CD8-positive, alpha-beta memory T cell (primary cell): ENCODE measurements at regions of chr2 and their contacts with region 1.

Region 1: DNA sequence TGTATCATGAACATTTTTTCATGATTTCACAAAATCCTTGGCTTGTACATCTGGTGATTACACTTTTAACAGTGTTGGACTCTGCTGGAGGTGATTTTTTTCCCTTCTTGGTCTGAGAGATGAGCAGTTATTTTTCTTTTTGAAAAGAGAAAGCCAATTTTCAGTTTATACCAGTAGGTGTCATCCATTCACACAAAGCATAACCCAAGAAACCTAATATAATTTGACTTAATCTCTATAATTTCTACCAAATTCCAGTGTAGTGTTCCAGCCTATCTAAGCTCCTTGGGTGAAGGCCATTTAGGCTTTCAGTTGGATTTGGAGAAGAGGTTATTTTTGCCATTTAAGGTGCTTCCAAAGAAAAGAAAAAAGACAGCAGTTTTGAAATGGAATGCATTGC is 7.7 kb upstream of the ICOS start:
- DNase-seq: no peak
- H3K4me3 ChIP-seq: no peak overlapping the region
- H3K4me3 Mint-ChIP-seq: no peak overlapping the region
- H3K27ac ChIP-seq: no peak overlapping the region
- H3K27ac Mint-ChIP-seq: no peak overlapping the region
- H3K4me1 ChIP-seq: peaks cover 23% of the 10 kb centered on the region
- H3K4me1 Mint-ChIP-seq: peaks cover 15 to 40% (median 29%) of the 10 kb centered on the region in 3 donors
- H3K27me3 ChIP-seq: no peaks in the 10 kb centered on the region
- H3K27me3 Mint-ChIP-seq: no peaks in the 10 kb centered on the region

Region 2: DNA sequence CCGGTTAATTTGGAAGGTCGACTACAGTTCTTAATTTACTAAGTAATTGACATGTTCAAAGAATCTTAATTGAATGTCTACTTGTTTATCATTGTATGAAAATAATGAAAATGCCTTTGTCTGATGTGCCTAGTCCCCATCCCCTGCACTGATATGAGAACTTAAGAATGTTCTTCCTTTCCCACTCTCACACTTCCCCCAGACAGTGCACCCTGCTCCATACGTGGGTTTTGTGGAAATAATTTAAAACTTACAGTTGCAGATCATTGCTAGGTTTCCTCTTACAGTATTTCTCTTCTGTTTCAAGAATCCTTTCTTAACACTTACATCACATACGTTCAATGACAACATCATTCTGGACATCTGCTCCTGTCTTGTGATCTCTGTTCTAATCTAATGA is 11.2 kb after region 1 on chr2:
- CTCF ChIA-PET with region 1: no interaction called
- POLR2A ChIA-PET with region 1: no interaction called
- DNase-seq: no peak
- H3K4me3 ChIP-seq: peak overlapping the region; percentile 74
- H3K4me3 Mint-ChIP-seq: peak overlapping the region; percentile 88 to 97 (median 89)
- H3K27ac ChIP-seq: no peak overlapping the region
- H3K27ac Mint-ChIP-seq: peak overlapping the region; percentile 34 to 97 (median 78)
- H3K4me1 ChIP-seq: peaks cover 51% of the 10 kb centered on the region
- H3K4me1 Mint-ChIP-seq: peaks cover 75 to 85% (median 83%) of the 10 kb centered on the region in 3 donors
- H3K27me3 ChIP-seq: no peaks in the 10 kb centered on the region
- H3K27me3 Mint-ChIP-seq: no peaks in the 10 kb centered on the region

Region 3: DNA sequence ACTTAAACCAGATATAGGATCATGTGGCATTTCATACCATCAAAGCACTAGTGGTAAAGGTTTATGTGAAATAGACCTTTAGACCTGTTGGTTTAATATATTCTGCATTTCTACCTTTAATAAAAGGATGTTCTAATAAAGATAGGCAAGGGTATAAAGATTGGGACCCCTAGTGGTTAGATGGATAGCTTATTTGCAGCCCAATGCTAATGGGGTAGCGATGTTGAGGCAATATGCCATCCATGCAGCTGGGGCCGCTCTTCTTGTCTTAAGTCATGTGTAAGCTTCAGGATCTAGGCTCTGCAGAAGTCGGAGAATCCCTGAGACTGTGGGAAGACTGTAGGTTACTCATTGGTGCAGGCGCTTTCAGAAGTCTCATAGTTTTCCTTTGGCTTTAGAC is 122.6 kb after region 1 on chr2:
- CTCF ChIA-PET with region 1: interaction called, 12 read pairs
- POLR2A ChIA-PET with region 1: no interaction called
- DNase-seq: peak in 2 of 5 donors; percentile 5 to 6
- H3K4me3 ChIP-seq: no peak overlapping the region
- H3K4me3 Mint-ChIP-seq: no peak overlapping the region
- H3K27ac ChIP-seq: no peak overlapping the region
- H3K27ac Mint-ChIP-seq: no peak overlapping the region
- H3K4me1 ChIP-seq: no peaks in the 10 kb centered on the region
- H3K4me1 Mint-ChIP-seq: peaks cover 16 to 19% (median 17%) of the 10 kb centered on the region in 3 donors
- H3K27me3 ChIP-seq: no peaks in the 10 kb centered on the region
- H3K27me3 Mint-ChIP-seq: peaks cover 0 to 2% of the 10 kb centered on the region in 2 donors